CD4-positive, alpha-beta T cell (primary cell): ENCODE measurements at regions of chr2 and their contacts with region 1.

Region 1: GRCh38 chr2:19362755-19363473 is 4.5 kb upstream of the OSR1 start:
- DNase-seq: peak in 8 of 14 experiments; percentile 25 to 68 (median 58)
- ATAC-seq: peak; percentile 47
- H3K4me3 ChIP-seq: peak overlapping the region; percentile 71
- H3K4me3 Mint-ChIP-seq: peak overlapping the region; percentile 91
- H3K27ac ChIP-seq: no peak overlapping the region
- H3K27ac Mint-ChIP-seq: peak overlapping the region; percentile 63
- H3K4me1 ChIP-seq: peaks cover 40% of the 10 kb centered on the region
- H3K4me1 Mint-ChIP-seq: peaks cover 46% of the 10 kb centered on the region
- H3K27me3 ChIP-seq: peaks cover 36% of the 10 kb centered on the region in 2 experiments
- H3K27me3 Mint-ChIP-seq: peaks cover 65% of the 10 kb centered on the region
- CTCF ChIP-seq: peak; percentile 46

Region 2: GRCh38 chr2:18520451-18521425 is 842.2 kb before region 1 on chr2:
- CTCF ChIA-PET with region 1: no interaction called
- POLR2A ChIA-PET with region 1: no interaction called
- intact Hi-C with region 1: loop called in 1 of 2 experiments (anchors 5 kb)
- DNase-seq: peak; percentile 57 to 81 (median 70)
- ATAC-seq: peak; percentile 68
- H3K4me3 ChIP-seq: no peak overlapping the region
- H3K4me3 Mint-ChIP-seq: no peak overlapping the region
- H3K27ac ChIP-seq: no peak overlapping the region
- H3K27ac Mint-ChIP-seq: no peak overlapping the region
- H3K4me1 ChIP-seq: no peaks in the 10 kb centered on the region
- H3K4me1 Mint-ChIP-seq: no peaks in the 10 kb centered on the region
- H3K27me3 ChIP-seq: peaks cover 0 to 5% of the 10 kb centered on the region in 2 experiments
- H3K27me3 Mint-ChIP-seq: peaks cover 40% of the 10 kb centered on the region
- CTCF ChIP-seq: peak; percentile 88

Region 3: GRCh38 chr2:19474128-19474527 is 111.2 kb after region 1 on chr2:
- CTCF ChIA-PET with region 1: no interaction called
- POLR2A ChIA-PET with region 1: no interaction called
- intact Hi-C with region 1: loop called in 1 of 2 experiments (anchors 10 kb)
- DNase-seq: peak in 13 of 14 experiments; percentile 10 to 81 (median 28)
- ATAC-seq: peak; percentile 89
- H3K4me3 ChIP-seq: no peak overlapping the region
- H3K4me3 Mint-ChIP-seq: peak overlapping the region; percentile 39
- H3K27ac ChIP-seq: no peak overlapping the region
- H3K27ac Mint-ChIP-seq: peak overlapping the region; percentile 21
- H3K4me1 ChIP-seq: peaks cover 8% of the 10 kb centered on the region
- H3K4me1 Mint-ChIP-seq: peaks cover 28% of the 10 kb centered on the region
- H3K27me3 ChIP-seq: peaks cover 0 to 11% of the 10 kb centered on the region in 2 experiments
- H3K27me3 Mint-ChIP-seq: peaks cover 63% of the 10 kb centered on the region
- CTCF ChIP-seq: no peak